ENCODE measurements at regions of chrX and their contacts with region 1.

Region 1: GRCh38 chrX:49163555-49164419 is 1.2 kb downstream of the MAGIX start:
- DNase-seq: peak; percentile 85
- H3K4me3 ChIP-seq: peak overlapping the region; percentile 63
- H3K27ac ChIP-seq: peak overlapping the region; percentile 66
- H3K4me1 ChIP-seq: peaks cover 37% of the 10 kb centered on the region
- CTCF ChIP-seq: peak; percentile 72

Region 2: GRCh38 chrX:49120099-49120498 is 43.7 kb before region 1 on chrX:
- CTCF ChIA-PET with region 1: no interaction called
- POLR2A ChIA-PET with region 1: no interaction called
- intact Hi-C with region 1: loop called (anchors 5 kb)
- DNase-seq: no peak
- H3K4me3 ChIP-seq: no peak overlapping the region
- H3K27ac ChIP-seq: no peak overlapping the region
- H3K4me1 ChIP-seq: peaks cover 7% of the 10 kb centered on the region
- CTCF ChIP-seq: peak; percentile 32; the same call in 1 of the 2 replicates

Region 3: DNA sequence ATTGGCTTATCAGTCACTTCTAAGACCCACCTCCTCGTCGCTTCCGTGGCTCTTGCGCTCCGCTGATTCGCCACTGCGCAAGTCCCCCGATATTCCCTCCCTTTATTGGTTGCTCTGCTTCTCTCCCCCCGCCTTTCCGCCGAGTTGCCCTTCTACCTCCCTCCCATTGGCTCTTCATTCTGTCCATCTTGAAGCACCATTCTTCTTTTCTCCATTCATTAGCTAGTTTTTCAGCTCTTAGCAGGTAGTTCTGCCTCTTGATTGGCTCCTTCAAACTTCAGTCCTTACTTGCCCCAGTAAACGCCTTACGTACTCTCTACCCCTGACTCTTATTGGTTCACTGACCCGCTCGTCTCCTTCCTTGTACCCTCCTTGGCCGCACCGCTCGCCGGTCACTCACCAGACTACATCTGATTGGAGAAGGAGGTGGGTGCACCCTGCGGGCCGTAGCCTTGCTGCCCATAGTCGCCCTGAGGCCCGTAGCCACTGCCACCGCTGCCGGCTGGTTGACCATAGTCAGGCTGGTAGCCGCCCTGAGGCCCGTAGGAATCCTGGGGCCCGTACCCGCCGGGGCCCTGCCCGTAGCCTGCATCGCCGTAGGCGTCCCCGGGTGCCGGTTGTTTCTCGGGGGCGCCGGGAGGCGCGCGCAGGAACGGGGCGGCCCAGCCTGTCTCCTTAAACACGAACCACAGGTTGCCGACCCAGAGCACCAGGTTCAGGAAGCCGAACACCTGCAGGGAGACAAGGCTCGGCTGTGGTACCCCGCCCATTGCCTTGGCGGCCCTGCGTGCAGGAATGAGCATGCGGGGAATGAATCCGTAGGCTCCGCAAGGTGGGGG is 27.5 kb after region 1 on chrX:
- CTCF ChIA-PET with region 1: interaction called, 8 read pairs
- POLR2A ChIA-PET with region 1: interaction called, 13 read pairs
- intact Hi-C with region 1: loop called (anchors 2 kb)
- DNase-seq: peak; percentile 97
- H3K4me3 ChIP-seq: peak overlapping the region; percentile 86
- H3K27ac ChIP-seq: peak overlapping the region; percentile 65
- H3K4me1 ChIP-seq: peaks cover 30% of the 10 kb centered on the region
- CTCF ChIP-seq: no peak